GM12878 (cell line): ENCODE measurements at regions of chr10 and their contacts with region 1.

Region 1: GRCh38 chr10:89783406-89783805 is 82.0 kb downstream of the KIF20B start:
- DNase-seq: no peak
- ATAC-seq: no peak
- H3K4me3 ChIP-seq: no peak overlapping the region
- H3K27ac ChIP-seq: no peak overlapping the region
- H3K4me1 ChIP-seq: no peaks in the 10 kb centered on the region
- H3K27me3 ChIP-seq: no peaks in the 10 kb centered on the region
- CTCF ChIP-seq: no peak
- EP300 ChIP-seq: no peak
- POLR2A ChIP-seq: no peak
- RAD21 ChIP-seq: no peak

Region 2: DNA sequence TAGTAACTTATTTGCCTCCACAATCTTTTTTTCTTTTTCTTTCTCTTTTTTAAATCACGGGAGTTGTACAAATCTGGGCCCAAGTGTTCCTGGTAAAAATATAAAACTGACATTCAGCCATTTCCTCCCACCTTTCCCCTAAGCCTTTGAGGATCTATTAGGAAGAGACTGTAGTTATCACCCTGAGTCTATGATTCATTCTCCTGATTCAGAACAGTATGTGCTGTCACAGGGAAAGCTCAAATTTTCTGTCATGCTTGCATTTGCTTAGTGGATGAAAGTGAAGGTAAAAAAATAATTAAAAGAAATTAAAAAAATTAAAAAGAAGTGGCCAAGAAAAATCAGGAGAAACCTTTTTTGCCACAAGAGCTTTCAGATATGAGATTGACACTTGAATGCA is 10.3 kb before region 1 on chr10:
- CTCF ChIA-PET with region 1: no interaction called
- POLR2A ChIA-PET with region 1: no interaction called
- RAD21 ChIA-PET with region 1: no interaction called
- SMC1A ChIA-PET with region 1: interaction called, 21 read pairs
- in situ Hi-C with region 1: no loop called
- intact Hi-C with region 1: no loop called
- DNase-seq: no peak
- ATAC-seq: no peak
- H3K4me3 ChIP-seq: no peak overlapping the region
- H3K27ac ChIP-seq: no peak overlapping the region
- H3K4me1 ChIP-seq: no peaks in the 10 kb centered on the region
- H3K27me3 ChIP-seq: no peaks in the 10 kb centered on the region
- CTCF ChIP-seq: no peak
- EP300 ChIP-seq: no peak
- POLR2A ChIP-seq: no peak
- RAD21 ChIP-seq: no peak